Mammary epithelial cell (primary cell): ENCODE measurements at regions of chr2 and their contacts with region 1.

Region 1: GRCh38 chr2:214410918-214411554 is at the start of gene VWC2L:
- DNase-seq: peak; percentile 73
- H3K4me3 ChIP-seq: no peak within 1 kb of the TSS
- H3K27ac ChIP-seq: no peak within 1 kb of the TSS
- H3K4me1 ChIP-seq: no peaks in the 10 kb centered on the region
- H3K27me3 ChIP-seq: no peaks in the 10 kb centered on the region
- CTCF ChIP-seq: no peak
- total RNA-seq, gene VWC2L: not detected

Region 2: DNA sequence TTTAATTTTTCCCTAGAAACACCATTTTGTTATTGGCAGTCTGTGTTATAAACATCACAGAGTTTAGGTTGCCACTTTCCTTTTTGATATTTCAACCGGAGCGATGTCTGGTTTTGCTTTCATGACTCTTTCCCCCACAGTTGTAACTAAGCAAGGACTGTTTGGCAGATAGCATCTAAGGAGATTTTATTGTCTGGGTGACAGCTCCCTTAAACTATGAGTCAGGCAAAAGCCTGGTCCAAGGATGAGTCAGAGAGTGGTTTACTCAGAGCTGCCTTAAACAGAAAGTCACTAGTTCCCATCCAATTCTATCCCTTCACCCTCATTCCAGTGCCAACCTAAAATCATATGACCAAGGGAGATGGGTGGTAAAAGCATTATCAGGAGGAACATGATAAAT is 341.8 kb before region 1 on chr2:
- CTCF ChIA-PET with region 1: interaction called, 15 read pairs
- dilution Hi-C with region 1: no loop called
- in situ Hi-C with region 1: no loop called
- intact Hi-C with region 1: no loop called
- DNase-seq: peak; percentile 94
- H3K4me3 ChIP-seq: no peak overlapping the region
- H3K27ac ChIP-seq: peak overlapping the region; percentile 72
- H3K4me1 ChIP-seq: peaks cover 3% of the 10 kb centered on the region
- H3K27me3 ChIP-seq: no peaks in the 10 kb centered on the region
- CTCF ChIP-seq: no peak

Region 3: DNA sequence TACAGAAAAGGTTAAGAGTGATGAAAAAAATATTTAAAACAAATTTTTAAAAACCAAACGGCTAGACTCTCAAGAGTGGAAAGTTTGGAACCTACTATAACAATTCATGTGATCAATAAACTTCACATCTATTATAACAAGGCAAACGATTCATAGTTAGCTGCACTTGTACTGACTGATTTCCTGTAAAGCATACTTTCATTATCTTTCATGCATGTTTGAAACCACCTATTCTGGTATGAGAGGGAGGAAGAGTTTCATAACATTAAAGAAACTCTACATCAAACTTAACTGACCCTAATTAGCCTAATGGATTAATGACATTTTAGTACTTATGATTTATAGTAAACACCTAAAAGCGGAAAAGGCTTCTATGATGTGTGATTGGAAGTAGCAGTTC is 43.9 kb before region 1 on chr2:
- CTCF ChIA-PET with region 1: no interaction called
- dilution Hi-C with region 1: no loop called
- in situ Hi-C with region 1: no loop called
- intact Hi-C with region 1: no loop called
- DNase-seq: no peak
- H3K4me3 ChIP-seq: no peak overlapping the region
- H3K27ac ChIP-seq: no peak overlapping the region
- H3K4me1 ChIP-seq: no peaks in the 10 kb centered on the region
- H3K27me3 ChIP-seq: peaks cover 9% of the 10 kb centered on the region
- CTCF ChIP-seq: no peak

Region 4: GRCh38 chr2:214830794-214831346 is 419.8 kb after region 1 on chr2:
- CTCF ChIA-PET with region 1: no interaction called
- dilution Hi-C with region 1: no loop called
- in situ Hi-C with region 1: no loop called
- intact Hi-C with region 1: loop called (anchors 10 kb)
- DNase-seq: peak; percentile 32
- H3K4me3 ChIP-seq: no peak overlapping the region
- H3K27ac ChIP-seq: no peak overlapping the region
- H3K4me1 ChIP-seq: no peaks in the 10 kb centered on the region
- H3K27me3 ChIP-seq: no peaks in the 10 kb centered on the region
- CTCF ChIP-seq: peak; percentile 47 to 57